Activated CD8-positive, alpha-beta T cell treated with anti-CD3 and anti-CD28 coated beads for 36 hours (primary cell): ENCODE measurements at regions of chr3 and their contacts with region 1.

Region 1: DNA sequence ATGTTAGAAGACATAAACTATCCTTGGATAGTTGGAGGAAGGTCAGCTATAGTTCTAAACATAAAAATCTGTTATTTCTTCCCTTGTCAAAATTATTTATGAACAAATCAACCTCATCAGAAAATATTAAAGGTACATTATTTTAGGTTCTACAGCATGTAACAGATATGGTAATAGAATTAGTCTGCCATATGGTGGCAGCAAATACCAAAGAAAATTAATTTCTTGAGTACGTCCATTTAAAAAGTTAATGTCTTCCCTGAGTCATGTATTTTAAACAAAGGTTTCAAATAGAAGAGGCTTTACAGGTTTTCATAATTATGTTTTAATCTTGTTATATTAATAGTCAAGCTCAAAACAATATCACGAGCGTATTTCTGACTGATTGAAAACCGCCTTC is 17.9 kb upstream of the ANKRD28 start:
- DNase-seq: no peak
- ATAC-seq: no peak
- H3K4me3 Mint-ChIP-seq: no peak overlapping the region
- H3K27ac Mint-ChIP-seq: no peak overlapping the region
- H3K4me1 Mint-ChIP-seq: peaks cover 45% of the 10 kb centered on the region
- H3K27me3 Mint-ChIP-seq: no peaks in the 10 kb centered on the region
- CTCF ChIP-seq: no peak

Region 2: DNA sequence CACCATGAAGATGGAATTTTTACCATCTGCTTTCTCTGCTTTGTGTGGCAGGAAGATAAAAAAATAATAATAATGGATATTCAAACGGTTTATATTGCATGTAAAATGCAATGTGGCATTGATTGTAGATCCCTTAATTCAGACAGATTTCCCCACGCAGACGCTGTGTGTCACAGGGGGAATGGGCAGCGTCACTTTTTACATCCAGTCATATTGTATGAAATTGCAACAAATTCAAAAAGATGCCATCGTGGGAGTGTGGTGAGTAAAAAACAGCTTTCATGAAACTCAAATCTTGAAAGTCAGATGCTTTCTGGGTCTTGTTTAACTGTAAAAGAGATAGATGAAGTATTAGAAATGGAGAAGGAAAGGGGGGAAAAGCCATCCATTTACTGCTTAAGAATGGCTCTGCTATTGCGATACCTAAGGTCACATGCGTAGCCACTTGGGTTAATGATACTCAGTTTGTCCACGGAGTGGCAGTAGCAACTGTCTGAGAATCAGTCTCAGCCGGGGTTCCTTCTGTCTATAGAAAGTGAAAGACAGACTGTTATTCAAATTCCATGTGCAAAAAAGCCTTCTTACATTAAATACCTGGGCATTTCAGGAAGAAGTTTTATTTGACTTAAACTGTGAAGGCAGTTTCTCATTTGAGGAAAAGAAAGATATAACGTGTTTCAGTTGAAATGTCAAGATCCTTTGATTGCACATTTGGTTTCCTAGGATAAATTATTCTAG is 185.7 kb before region 1 on chr3:
- CTCF ChIA-PET with region 1: interaction called, 51 read pairs
- POLR2A ChIA-PET with region 1: interaction called, 3 read pairs
- intact Hi-C with region 1: loop called (anchors 1 kb)
- DNase-seq: peak; percentile 78
- ATAC-seq: peak; percentile 96
- H3K4me3 Mint-ChIP-seq: peak overlapping the region; percentile 59
- H3K27ac Mint-ChIP-seq: peak overlapping the region; percentile 86
- H3K4me1 Mint-ChIP-seq: peaks cover 52% of the 10 kb centered on the region
- H3K27me3 Mint-ChIP-seq: no peaks in the 10 kb centered on the region
- CTCF ChIP-seq: peak; percentile 76

Region 3: GRCh38 chr3:15636003-15636709 is 179.5 kb before region 1 on chr3:
- CTCF ChIA-PET with region 1: interaction called, 51 read pairs
- POLR2A ChIA-PET with region 1: interaction called, 4 read pairs
- intact Hi-C with region 1: no loop called
- DNase-seq: peak; percentile 74
- ATAC-seq: peak; percentile 79
- H3K4me3 Mint-ChIP-seq: peak overlapping the region; percentile 14
- H3K27ac Mint-ChIP-seq: peak overlapping the region; percentile 87
- H3K4me1 Mint-ChIP-seq: peaks cover 69% of the 10 kb centered on the region
- H3K27me3 Mint-ChIP-seq: no peaks in the 10 kb centered on the region
- CTCF ChIP-seq: no peak

Region 4: DNA sequence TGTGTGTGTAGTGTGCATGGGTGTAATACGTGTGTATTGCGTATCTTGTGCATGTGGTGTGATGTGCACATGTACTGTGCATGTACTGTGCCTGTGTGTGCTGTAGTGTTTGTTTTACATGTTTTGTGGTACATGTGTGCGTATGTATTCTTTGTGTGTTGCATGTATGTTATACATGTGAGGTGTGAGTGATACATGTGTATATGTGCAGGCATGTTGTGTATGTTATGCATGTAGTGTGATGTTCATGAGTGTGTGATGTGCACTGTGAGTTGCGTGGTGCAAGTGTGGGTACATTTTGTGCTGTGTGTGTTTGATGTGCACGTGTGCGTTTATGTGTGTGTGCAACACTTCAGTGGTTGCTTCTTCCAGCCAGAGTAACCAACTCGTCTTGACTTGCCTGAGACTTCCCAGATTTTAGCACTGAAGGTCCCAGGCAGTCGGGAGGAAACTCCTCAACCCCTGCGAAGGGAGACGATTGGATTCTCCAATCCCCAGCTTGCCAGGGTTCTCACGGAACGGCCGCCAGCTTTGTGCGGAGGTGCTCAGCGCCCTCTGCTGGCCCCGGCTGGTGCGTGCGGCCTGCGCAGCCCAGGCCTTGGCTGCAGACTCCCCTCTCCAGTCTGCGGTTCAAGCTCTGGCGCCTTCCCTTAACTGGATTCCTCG is 362.4 kb after region 1 on chr3:
- CTCF ChIA-PET with region 1: no interaction called
- POLR2A ChIA-PET with region 1: no interaction called
- intact Hi-C with region 1: loop called (anchors 5 kb)
- DNase-seq: peak; percentile 76
- ATAC-seq: peak; percentile 88
- H3K4me3 Mint-ChIP-seq: no peak overlapping the region
- H3K27ac Mint-ChIP-seq: no peak overlapping the region
- H3K4me1 Mint-ChIP-seq: no peaks in the 10 kb centered on the region
- H3K27me3 Mint-ChIP-seq: peaks cover 18% of the 10 kb centered on the region
- CTCF ChIP-seq: peak; percentile 96